Activated naive CD4-positive, alpha-beta T cell treated with anti-CD3 and anti-CD28 coated beads for 36 hours (primary cell): ENCODE measurements at regions of chr5 and their contacts with region 1.

Region 1: GRCh38 chr5:76818844-76819831 is at the start of gene F2RL1:
- DNase-seq: peak; percentile 67
- H3K4me3 Mint-ChIP-seq: peak within 1 kb of the TSS; percentile 80
- H3K27ac Mint-ChIP-seq: no peak within 1 kb of the TSS
- H3K4me1 Mint-ChIP-seq: peaks cover 16% of the 10 kb centered on the region
- H3K27me3 Mint-ChIP-seq: peaks cover 11% of the 10 kb centered on the region
- total RNA-seq, gene F2RL1: 2.9 to 3.0 TPM

Region 2: DNA sequence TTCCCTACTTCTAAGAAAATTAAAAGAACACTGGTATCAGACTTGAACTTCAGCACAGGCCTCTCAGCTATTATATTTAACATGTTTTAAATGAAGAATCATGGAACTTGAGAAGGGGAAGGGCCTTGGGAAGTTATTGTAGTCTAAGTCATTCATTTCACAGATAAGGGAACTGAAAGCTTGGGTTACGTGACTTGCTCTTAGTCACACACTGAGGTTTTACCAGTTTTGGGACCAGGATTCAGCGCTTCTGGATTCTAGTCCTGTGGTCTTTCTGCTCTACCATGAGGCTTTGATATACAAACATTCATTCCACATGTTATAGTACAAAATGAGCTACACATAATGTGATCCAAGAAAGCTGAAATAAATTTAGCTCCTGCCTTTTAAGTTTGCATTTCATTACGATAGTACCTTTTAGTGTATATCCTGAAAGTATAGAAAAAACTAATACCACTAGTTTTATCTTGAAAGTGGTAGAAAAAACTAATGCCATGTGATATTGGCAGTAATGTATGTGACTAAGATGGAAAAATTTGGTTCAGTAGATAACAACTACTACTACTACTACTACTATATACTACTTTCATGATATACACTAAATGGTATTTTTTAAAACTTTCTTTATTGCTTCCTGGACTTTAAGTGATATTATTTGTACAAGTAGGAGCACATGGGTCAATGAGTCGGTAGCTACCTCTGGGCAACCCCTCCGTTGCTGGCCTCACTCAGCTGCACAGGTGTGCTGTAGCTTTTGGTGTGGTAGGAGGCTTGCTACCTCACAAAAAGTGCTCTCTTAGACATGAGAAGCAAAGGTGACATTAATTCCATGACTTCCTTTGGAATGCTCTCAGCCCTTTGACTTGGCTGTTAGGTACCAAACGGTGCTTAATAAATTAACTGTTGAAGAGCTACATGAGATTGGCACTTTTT is 236.6 kb before region 1 on chr5:
- CTCF ChIA-PET with region 1: no interaction called
- intact Hi-C with region 1: no loop called
- DNase-seq: peak; percentile 65
- H3K4me3 Mint-ChIP-seq: no peak overlapping the region
- H3K27ac Mint-ChIP-seq: peak overlapping the region; percentile 36
- H3K4me1 Mint-ChIP-seq: peaks cover 27% of the 10 kb centered on the region
- H3K27me3 Mint-ChIP-seq: no peaks in the 10 kb centered on the region

Region 3: DNA sequence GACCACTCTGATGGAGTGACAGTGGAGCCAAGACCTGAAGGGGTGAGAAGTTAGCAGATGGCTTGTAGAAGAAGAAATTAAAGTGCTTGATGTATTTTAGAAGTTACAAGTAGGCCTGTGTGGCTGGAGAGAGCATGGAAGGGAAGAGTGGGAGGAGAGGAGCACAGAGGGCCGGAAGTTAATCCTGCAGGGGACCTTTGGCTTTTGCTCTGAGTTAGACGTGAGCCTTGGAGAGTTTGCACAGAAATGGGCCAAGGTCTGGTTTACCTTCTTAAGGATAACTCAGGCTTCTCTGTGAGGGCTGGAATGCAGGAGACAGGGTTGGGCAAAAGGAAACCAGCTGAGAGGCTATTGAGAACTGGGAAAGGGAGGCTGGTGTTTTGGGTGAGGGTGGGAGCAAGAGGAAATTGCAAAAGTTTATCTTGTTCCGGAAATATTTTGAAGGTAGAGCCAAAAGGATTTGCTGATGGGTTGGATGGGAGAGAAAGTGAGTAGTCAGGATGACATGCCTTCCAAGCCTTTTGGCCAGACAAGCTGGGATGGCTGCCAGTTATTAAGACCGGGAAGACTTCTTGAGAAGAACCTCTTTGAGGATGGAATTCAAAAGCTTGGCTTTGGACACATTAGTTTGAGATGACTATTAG is 17.9 kb before region 1 on chr5:
- CTCF ChIA-PET with region 1: no interaction called
- intact Hi-C with region 1: no loop called
- DNase-seq: no peak
- H3K4me3 Mint-ChIP-seq: no peak overlapping the region
- H3K27ac Mint-ChIP-seq: no peak overlapping the region
- H3K4me1 Mint-ChIP-seq: no peaks in the 10 kb centered on the region
- H3K27me3 Mint-ChIP-seq: no peaks in the 10 kb centered on the region

Region 4: GRCh38 chr5:76849419-76850291 is 30.5 kb after region 1 on chr5 and contains the start of gene S100Z:
- CTCF ChIA-PET with region 1: interaction called, 3 read pairs
- intact Hi-C with region 1: loop called (anchors 2 kb)
- DNase-seq: peak; percentile 73
- H3K4me3 Mint-ChIP-seq: peak within 1 kb of the TSS; percentile 34
- H3K27ac Mint-ChIP-seq: peak within 1 kb of the TSS; percentile 8
- H3K4me1 Mint-ChIP-seq: peaks cover 15% of the 10 kb centered on the region
- H3K27me3 Mint-ChIP-seq: no peaks in the 10 kb centered on the region
- total RNA-seq, gene S100Z: 0.81 to 1.1 TPM